ENCODE measurements at regions of chr3 and their contacts with region 1.

Region 1: GRCh38 chr3:24494618-24495325 is at the start of gene THRB:
- DNase-seq: peak; percentile 77 to 79
- ATAC-seq: peak; percentile 71 to 87 (median 80)
- H3K4me3 ChIP-seq: peak within 1 kb of the TSS; percentile 46 to 85 (median 76)
- H3K27ac ChIP-seq: peak within 1 kb of the TSS; percentile 87 to 96 (median 94)
- H3K4me1 ChIP-seq: peaks cover 2 to 45% (median 20%) of the 10 kb centered on the region in 9 donors
- H3K27me3 ChIP-seq: peaks cover 0 to 55% (median 0%) of the 10 kb centered on the region in 7 donors
- CTCF ChIP-seq: peak in 8 of 9 donors; percentile 21 to 51 (median 36)
- total RNA-seq, gene THRB: 14.4 to 32.8 (median 26.4) TPM

Region 2: DNA sequence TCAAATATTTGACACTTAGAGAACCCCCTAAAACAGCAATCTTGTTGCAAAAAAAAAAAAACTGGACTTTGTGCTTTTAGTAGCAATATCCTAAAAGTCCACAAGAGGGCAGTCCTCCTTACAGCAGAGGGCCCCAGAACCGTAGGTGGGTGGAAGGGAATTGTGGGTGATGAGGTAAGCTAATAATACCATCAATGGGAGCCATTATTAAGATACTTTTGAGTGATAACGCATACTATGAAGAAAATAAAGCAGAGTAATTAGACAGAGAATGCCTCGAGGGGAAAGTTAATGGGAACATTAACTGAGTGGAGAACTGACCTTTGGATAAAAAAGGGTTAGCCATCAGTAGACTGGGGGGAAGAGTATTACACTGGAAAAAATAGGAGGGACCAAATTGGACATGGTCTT is 230.0 kb before region 1 on chr3:
- intact Hi-C with region 1: loop called in 9 of 10 experiments (anchors 1 to 10 kb)
- DNase-seq: no peak
- ATAC-seq: peak in 4 of 8 donors; percentile 17 to 67 (median 48)
- H3K4me3 ChIP-seq: no peak overlapping the region
- H3K27ac ChIP-seq: no peak overlapping the region
- H3K4me1 ChIP-seq: peaks cover 0 to 16% (median 0%) of the 10 kb centered on the region in 9 donors
- H3K27me3 ChIP-seq: no peaks in the 10 kb centered on the region
- CTCF ChIP-seq: peak; percentile 48 to 80 (median 69)

Region 3: GRCh38 chr3:24359645-24360462 is 134.9 kb before region 1 on chr3:
- intact Hi-C with region 1: loop called in 5 of 10 experiments (anchors 2 to 10 kb)
- DNase-seq: no peak
- ATAC-seq: no peak
- H3K4me3 ChIP-seq: no peak overlapping the region
- H3K27ac ChIP-seq: no peak overlapping the region
- H3K4me1 ChIP-seq: peaks cover 0 to 35% (median 13%) of the 10 kb centered on the region in 9 donors
- H3K27me3 ChIP-seq: no peaks in the 10 kb centered on the region
- CTCF ChIP-seq: peak in 5 of 9 donors; percentile 23 to 46 (median 39)

Region 4: DNA sequence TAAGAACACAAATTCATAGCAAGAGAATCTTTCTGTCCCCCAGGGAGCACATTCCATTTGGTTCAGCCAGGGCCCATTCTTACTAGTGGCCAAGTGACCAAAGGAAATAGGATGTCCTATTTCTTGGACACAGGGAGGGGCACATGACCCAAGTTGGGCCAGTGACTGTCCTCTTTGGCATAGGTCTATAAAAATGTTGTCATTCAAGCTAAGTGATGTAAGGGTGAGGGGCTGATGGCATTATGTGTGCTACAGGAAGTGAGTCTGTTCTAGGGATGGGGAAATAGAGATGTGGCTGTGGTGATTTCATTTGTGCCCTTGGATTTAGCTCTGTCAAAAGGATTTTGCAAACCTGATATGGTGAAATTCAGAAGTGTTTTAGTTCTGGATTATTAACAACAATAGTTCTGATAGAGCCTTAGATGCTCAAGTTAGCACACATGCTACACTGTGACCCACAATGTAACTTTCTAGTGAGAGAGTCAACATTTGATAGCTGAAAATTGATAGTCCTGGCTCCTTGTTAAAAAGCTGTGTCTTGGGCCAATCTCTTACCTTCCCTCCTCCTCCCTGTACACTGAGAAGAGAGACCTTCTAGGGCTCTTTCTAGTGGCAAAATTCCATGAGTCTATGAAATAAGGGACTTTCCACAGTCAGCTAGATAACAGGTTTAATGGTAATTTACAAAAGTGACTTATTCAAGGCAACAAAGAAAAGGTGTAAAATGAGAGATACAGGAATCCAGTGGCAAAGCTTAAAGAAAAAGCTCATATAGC is 117.4 kb before region 1 on chr3:
- intact Hi-C with region 1: loop called in 2 of 10 experiments (anchors 5 to 10 kb)
- DNase-seq: no peak
- ATAC-seq: peak in 1 of 8 donors; percentile 74
- H3K4me3 ChIP-seq: no peak overlapping the region
- H3K27ac ChIP-seq: no peak overlapping the region
- H3K4me1 ChIP-seq: peaks cover 0 to 58% (median 28%) of the 10 kb centered on the region in 9 donors
- H3K27me3 ChIP-seq: no peaks in the 10 kb centered on the region
- CTCF ChIP-seq: no peak

Region 5: DNA sequence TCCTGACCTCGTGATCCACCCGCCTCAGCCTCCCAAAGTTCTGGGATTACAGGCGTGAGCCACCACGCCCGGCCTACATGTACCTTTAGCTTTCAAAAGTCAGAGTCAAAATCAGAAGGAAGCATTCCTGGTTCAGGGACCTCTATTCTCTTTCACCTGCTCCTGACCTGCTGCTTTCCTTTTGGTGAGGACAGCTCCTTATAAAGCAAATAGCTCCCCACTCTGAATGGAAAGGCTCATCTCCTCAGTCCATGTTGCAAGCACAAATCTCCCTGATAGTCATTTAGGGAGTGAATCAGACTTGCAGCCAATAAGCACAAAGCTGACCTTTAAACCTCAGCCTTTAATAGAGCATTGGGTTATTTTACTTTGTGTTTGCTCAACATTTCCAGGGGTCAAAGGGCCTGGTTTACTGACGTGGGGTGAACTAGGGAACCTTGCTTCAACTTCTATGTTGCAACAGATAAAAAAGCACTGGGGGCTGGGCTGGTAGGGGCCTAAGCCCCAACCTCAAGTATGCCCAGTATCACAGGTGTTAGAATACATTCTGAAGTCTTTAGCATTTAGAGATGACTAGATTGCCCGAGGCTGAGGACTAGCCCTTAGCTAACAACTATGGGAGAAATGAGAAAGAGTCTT is 43.2 kb before region 1 on chr3:
- intact Hi-C with region 1: loop called in 2 of 10 experiments (anchors 5 kb)
- DNase-seq: no peak
- ATAC-seq: peak in 4 of 8 donors; percentile 28 to 64 (median 42)
- H3K4me3 ChIP-seq: no peak overlapping the region
- H3K27ac ChIP-seq: no peak overlapping the region
- H3K4me1 ChIP-seq: peaks cover 0 to 33% (median 19%) of the 10 kb centered on the region in 9 donors
- H3K27me3 ChIP-seq: no peaks in the 10 kb centered on the region
- CTCF ChIP-seq: no peak

Measured in heart right ventricle (tissue), 16 donors.